Heart left ventricle (tissue), 16 donors: ENCODE measurements at regions of chr5 and their contacts with region 1.

Region 1: GRCh38 chr5:103821361-103821760 is 258.8 kb upstream of the NUDT12 start:
- DNase-seq: no peak
- ATAC-seq: no peak
- H3K4me3 ChIP-seq: no peak overlapping the region
- H3K27ac ChIP-seq: no peak overlapping the region
- H3K4me1 ChIP-seq: no peaks in the 10 kb centered on the region
- H3K27me3 ChIP-seq: no peaks in the 10 kb centered on the region
- CTCF ChIP-seq: no peak
- POLR2A ChIP-seq: no peak

Region 2: DNA sequence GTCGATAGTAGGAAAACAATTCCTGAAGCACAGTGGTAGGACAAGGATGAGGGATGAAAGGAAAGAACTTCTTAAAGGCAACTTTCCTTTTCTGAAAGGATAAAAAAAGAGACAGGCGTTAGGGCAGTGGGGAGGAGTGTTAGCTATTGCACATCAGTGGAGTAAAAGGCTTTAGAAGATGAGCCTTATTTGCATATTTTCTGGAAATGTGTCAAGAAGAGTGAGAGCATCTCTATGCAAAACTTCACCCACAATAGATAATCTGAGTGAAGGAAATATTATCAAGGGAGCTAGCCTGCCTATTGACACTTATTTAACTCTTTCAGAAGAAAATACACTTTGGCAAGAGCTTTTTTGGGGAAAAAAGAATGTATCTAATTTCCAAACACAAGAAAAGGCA is 411.2 kb before region 1 on chr5:
- intact Hi-C with region 1: no loop called
- DNase-seq: no peak
- ATAC-seq: no peak
- H3K4me3 ChIP-seq: no peak overlapping the region
- H3K27ac ChIP-seq: no peak overlapping the region
- H3K4me1 ChIP-seq: no peaks in the 10 kb centered on the region
- H3K27me3 ChIP-seq: no peaks in the 10 kb centered on the region
- CTCF ChIP-seq: no peak
- POLR2A ChIP-seq: no peak

Region 3: GRCh38 chr5:103847060-103847459 is 25.7 kb after region 1 on chr5:
- intact Hi-C with region 1: loop called in 1 of 10 experiments (anchors 2 kb)
- DNase-seq: no peak
- ATAC-seq: no peak
- H3K4me3 ChIP-seq: no peak overlapping the region
- H3K27ac ChIP-seq: no peak overlapping the region
- H3K4me1 ChIP-seq: no peaks in the 10 kb centered on the region
- H3K27me3 ChIP-seq: no peaks in the 10 kb centered on the region
- CTCF ChIP-seq: no peak
- POLR2A ChIP-seq: no peak